ENCODE measurements at regions of chr20 and their contacts with region 1.

Region 1: DNA sequence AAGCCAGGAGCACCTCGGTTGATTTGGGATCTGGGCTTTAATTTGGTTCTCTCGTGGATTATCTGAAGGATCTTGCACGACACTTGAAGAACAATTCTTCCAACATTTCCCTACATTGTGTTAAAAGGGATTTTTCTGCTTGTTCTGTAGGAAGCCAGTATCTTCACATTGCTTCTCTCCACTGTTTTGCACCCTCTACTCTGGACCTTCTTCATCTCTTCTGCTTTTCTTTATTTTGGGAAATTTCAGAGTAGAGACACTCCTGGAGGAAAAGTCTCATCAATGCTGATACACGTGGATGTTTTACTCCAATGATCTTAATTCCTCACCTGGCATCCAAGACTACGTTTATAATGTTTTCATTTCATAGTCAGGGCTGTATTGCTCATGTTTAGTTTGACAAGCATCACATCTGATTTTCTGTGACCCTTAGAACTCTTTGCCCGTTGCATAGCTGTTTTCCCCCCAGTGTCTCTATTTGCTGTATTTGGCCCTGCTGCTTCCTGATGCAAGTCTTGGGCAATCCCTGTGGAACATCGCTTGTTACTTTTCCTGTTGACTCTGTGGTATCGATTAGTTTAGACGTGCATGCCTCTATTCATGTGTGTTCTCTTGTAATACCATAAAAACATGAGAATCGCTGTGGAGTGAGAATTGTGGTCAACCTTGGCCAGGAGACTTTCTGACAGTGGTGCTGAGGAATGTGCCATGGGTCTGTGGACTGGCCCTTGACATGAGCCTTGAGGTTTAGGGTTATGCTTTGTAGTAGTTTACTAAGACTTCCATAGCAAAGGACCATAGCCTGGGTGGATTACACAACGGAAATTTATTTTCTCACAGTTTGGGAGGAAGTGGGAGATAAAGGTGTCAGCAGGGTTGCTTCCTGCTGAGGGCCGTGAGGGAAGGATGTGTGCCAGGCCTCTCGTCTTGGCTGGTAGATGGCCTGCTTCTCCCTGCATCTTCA is 12.5 kb downstream of the PLCB1 start:
- DNase-seq: peak; percentile 54
- H3K4me3 ChIP-seq: no peak overlapping the region
- H3K27ac ChIP-seq: peak overlapping the region; percentile 44
- H3K4me1 ChIP-seq: peaks cover 53% of the 10 kb centered on the region
- H3K27me3 ChIP-seq: no peaks in the 10 kb centered on the region
- CTCF ChIP-seq: no peak
- POLR2A ChIP-seq: no peak

Region 2: DNA sequence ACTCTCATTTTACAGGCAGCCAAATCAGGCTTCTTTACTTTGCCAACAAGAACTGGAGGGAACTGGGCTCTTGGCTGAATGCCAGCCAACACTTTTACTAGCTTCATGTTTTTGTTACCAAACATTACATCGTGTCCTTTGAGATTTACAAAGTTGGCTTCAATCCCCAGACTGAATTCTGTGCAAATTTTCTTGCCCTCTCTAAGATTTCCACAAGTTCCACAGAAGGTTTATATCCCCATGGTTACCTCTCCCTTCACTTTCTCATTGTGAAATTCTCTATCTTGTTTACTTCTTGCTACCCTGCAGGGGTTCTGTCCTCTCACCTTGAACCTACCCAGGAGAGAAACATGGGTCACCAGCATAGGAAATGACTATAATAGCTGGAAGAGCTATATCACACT is 50.1 kb before region 1 on chr20:
- CTCF ChIA-PET with region 1: no interaction called
- POLR2A ChIA-PET with region 1: no interaction called
- dilution Hi-C with region 1: no loop called
- intact Hi-C with region 1: loop called (anchors 1 kb)
- DNase-seq: peak; percentile 87
- H3K4me3 ChIP-seq: no peak overlapping the region
- H3K27ac ChIP-seq: peak overlapping the region; percentile 94
- H3K4me1 ChIP-seq: peaks cover 25% of the 10 kb centered on the region
- H3K27me3 ChIP-seq: no peaks in the 10 kb centered on the region
- CTCF ChIP-seq: no peak
- POLR2A ChIP-seq: no peak

Region 3: DNA sequence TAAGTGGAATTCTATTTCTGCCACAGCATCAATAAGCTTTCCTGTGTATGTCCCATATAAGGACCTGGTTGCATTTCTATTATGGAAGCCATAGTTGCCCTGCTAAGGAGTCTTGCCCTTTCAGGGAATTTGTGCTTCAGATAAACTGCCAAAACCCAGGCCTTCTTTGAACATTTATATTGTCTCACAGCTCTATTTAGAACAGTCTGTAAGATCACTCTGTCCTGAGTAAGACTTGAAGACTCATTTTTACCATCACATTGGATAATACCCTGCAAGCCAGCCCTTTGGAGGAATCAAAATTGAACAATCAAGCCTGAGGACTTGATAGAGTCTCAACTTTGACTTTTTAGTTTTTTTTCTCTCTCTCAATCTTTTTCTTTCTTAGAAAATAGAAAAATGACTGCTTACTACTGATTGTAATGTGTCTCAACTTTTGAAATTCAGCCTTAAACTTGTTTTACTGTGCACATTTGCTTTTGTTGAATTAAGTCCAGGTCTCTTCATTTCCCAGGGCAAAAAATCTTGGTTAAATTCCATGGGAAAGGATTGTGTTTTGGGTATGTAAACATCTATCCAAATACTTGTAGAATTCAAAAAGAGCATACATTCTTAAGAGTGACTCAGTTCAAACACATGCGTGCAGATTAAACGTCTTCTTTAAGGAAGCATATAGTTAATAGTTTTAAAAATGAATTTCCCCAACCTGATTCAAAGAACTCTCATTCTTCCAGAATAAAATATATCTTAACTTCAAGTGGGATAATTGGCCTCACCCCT is 78.7 kb after region 1 on chr20:
- CTCF ChIA-PET with region 1: no interaction called
- POLR2A ChIA-PET with region 1: no interaction called
- dilution Hi-C with region 1: no loop called
- intact Hi-C with region 1: loop called (anchors 5 kb)
- DNase-seq: peak; percentile 71
- H3K4me3 ChIP-seq: no peak overlapping the region
- H3K27ac ChIP-seq: no peak overlapping the region
- H3K4me1 ChIP-seq: peaks cover 10% of the 10 kb centered on the region
- H3K27me3 ChIP-seq: no peaks in the 10 kb centered on the region
- CTCF ChIP-seq: no peak
- POLR2A ChIP-seq: no peak

Region 4: GRCh38 chr20:8389381-8390036 is 244.9 kb after region 1 on chr20:
- CTCF ChIA-PET with region 1: interaction called, 4 read pairs
- POLR2A ChIA-PET with region 1: no interaction called
- dilution Hi-C with region 1: no loop called
- intact Hi-C with region 1: loop called (anchors 5 kb)
- DNase-seq: peak; percentile 61
- H3K4me3 ChIP-seq: no peak overlapping the region
- H3K27ac ChIP-seq: no peak overlapping the region
- H3K4me1 ChIP-seq: peaks cover 3% of the 10 kb centered on the region
- H3K27me3 ChIP-seq: no peaks in the 10 kb centered on the region
- CTCF ChIP-seq: peak; percentile 6 to 20
- POLR2A ChIP-seq: no peak

Region 5: GRCh38 chr20:8492173-8492572 is 347.6 kb after region 1 on chr20:
- CTCF ChIA-PET with region 1: no interaction called
- POLR2A ChIA-PET with region 1: no interaction called
- dilution Hi-C with region 1: no loop called
- intact Hi-C with region 1: no loop called
- DNase-seq: peak; percentile 23
- H3K4me3 ChIP-seq: no peak overlapping the region
- H3K27ac ChIP-seq: no peak overlapping the region
- H3K4me1 ChIP-seq: no peaks in the 10 kb centered on the region
- H3K27me3 ChIP-seq: no peaks in the 10 kb centered on the region
- CTCF ChIP-seq: no peak
- POLR2A ChIP-seq: no peak

Measured in endothelial cell of umbilical vein (primary cell).